ENCODE measurements at regions of chr10 and their contacts with region 1.

Region 1: DNA sequence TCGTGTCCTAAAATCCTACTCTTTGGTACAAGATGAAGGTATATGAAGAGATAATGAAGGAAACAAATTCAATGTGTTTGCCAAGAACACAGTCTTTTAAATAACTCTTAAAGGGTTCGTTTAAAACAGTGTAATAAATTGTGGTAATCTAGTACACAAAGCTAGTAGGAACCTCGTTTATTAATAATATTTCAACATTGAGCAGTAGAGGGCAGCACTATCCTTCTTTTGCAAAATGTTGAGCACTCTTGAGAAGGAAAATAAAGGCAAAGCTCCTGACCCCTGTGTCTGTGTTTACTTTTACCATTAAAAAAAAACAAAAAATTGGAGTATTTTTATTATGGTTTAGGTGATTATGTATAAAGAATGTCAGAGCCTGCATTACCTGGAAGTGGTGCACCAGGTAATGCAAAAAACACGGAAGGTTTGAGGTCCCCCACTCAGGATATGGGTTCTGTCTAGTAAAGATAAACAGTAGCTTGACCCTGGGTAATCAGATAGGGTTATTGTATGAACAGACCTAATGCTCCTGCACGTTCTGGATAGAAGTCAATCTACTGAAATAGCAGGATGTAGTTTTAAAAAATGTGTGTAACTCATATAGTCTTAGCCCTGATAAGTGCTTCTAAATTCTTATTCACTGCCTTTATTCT is 5.7 kb upstream of the GOT1 start:
- DNase-seq: no peak

Region 2: GRCh38 chr10:99612167-99612831 is 176.2 kb after region 1 on chr10:
- CTCF ChIA-PET with region 1: interaction called, 19 read pairs
- POLR2A ChIA-PET with region 1: interaction called, 5 read pairs
- DNase-seq: peak; percentile 77